Activated CD4-positive, alpha-beta T cell treated with anti-CD3 and anti-CD28 coated beads, Interleukin-2, amount 10 ng/mL, durations not matched to agents 24 days and 14 days (primary cell): ENCODE measurements at regions of chr20 and their contacts with region 1.

Region 1: DNA sequence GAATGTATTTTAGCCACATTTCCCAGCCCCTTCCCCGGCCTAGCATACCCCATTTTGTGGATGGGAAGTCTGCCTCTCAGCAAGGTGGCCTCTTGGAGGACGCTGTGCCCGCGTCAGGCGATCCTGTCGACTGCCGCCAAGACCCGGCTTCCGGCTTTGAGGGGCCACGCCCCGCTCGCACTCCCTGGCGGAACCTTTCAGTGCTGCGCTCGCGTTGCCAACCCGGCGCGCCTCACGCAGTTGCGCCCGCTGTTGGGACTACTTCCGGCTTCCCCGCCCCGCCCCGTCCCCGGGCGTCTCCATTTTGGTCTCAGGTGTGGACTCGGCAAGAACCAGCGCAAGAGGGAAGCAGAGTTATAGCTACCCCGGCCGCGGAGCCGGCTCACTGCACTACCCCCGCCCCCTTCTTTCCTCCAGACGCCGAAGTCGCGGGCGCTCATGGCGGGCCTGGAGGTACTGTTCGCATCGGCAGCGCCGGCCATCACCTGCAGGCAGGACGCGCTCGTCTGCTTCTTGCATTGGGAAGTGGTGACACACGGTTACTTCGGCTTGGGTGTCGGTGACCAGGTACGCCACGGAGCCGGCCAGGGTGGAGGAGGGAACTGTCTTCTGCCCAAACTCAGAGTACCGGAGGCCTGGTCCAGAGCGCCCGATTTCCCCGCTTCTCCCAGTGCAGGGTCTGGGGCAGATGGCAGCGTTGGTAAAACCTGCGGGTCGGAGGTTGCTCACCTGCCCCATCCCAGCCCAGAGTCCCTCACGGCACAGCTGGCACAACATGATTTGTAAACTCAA is at the start of gene PSMF1:
- DNase-seq: peak; percentile 99
- H3K4me3 Mint-ChIP-seq: peak within 1 kb of the TSS; percentile 96
- H3K27ac Mint-ChIP-seq: peak within 1 kb of the TSS; percentile 88
- H3K4me1 Mint-ChIP-seq: peaks cover 47% of the 10 kb centered on the region
- H3K27me3 Mint-ChIP-seq: peaks cover 2% of the 10 kb centered on the region
- total RNA-seq, gene PSMF1: 168 and 172 TPM in 2 replicates

Region 2: GRCh38 chr20:543369-544152 is 575.0 kb before region 1 on chr20 and contains the start of gene CSNK2A1:
- intact Hi-C with region 1: loop called (anchors 5 kb)
- DNase-seq: peak; percentile 99
- H3K4me3 Mint-ChIP-seq: peak within 1 kb of the TSS; percentile 88
- H3K27ac Mint-ChIP-seq: peak within 1 kb of the TSS; percentile 97
- H3K4me1 Mint-ChIP-seq: peaks cover 38% of the 10 kb centered on the region
- H3K27me3 Mint-ChIP-seq: peaks cover 9% of the 10 kb centered on the region
- total RNA-seq, gene CSNK2A1: 179 TPM in 2 replicates

Region 3: DNA sequence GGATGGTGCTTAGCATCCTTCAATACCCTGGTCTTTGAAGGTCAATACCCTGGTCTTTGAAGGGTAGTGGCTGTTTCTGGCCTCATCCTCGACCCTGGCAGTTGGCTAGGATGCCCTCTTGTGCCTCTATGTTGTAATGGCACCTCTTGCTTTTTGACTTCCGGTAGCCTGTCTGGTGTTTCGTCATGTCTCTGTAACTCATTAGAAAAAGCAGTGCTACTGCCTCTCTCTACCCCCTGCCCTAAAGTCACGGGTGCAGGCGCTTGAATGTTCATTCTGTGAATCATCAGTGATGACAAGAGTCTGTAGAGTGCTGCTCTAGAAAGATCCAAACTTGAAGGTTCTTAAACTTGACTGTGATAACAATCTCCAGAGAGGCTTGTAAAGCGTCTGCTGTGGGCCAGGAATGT is 144.7 kb before region 1 on chr20:
- intact Hi-C with region 1: loop called (anchors 10 kb)
- DNase-seq: peak; percentile 81
- H3K4me3 Mint-ChIP-seq: no peak overlapping the region
- H3K27ac Mint-ChIP-seq: no peak overlapping the region
- H3K4me1 Mint-ChIP-seq: peaks cover 2% of the 10 kb centered on the region
- H3K27me3 Mint-ChIP-seq: peaks cover 3% of the 10 kb centered on the region

Region 4: DNA sequence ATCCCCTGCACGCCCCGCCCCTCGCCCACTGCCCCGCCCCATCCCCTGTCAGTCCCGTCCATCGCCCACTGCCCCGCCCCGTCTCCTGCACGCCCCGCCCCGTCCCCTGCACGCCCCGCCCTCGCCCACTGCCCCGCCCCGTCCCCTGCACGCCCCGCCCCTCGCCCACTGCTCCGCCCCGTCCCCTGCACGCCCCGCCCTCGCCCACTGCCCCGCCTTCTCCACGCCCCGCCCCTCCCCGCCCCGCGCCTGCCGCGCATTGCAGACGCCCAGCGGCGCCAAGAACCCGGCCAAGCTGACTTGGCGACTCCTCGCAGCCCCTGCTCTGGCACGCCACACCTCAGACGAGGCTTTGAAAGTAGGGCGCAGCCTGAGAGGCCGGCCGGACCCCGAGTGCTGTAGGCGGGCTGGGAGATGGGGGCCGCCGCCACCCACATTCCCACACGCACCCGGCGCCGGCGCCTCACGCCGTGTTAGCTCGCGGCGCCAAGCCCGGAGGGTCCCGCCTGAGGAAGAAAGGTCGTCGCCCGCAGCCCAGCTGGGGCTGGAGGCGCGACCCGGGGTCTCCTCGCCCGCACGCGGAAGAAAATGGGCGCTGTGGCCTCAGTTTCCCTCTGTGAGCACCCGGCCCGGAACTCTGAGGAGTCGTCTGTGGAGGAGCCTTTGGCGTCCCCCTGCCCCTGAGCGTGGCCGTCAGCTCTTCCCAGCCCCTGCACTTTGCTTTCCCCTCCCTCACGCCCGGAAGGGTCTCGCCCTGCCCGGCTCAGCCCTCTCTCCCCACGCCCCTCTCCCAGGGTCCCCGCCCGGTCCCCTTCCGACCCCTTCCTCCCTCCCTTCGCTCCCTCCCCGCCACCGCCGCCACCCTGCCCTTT is 107.5 kb after region 1 on chr20 and contains the start of gene RAD21L1:
- intact Hi-C with region 1: loop called (anchors 5 kb)
- DNase-seq: peak; percentile 88
- H3K4me3 Mint-ChIP-seq: peak within 1 kb of the TSS; percentile 86
- H3K27ac Mint-ChIP-seq: peak within 1 kb of the TSS; percentile 11
- H3K4me1 Mint-ChIP-seq: peaks cover 16% of the 10 kb centered on the region
- H3K27me3 Mint-ChIP-seq: peaks cover 50% of the 10 kb centered on the region
- total RNA-seq, gene RAD21L1: not detected in 2 replicates

Region 5: GRCh38 chr20:1466211-1467081 is 347.9 kb after region 1 on chr20 and contains the start of gene NSFL1C:
- intact Hi-C with region 1: loop called (anchors 1 kb)
- DNase-seq: peak; percentile 100
- H3K4me3 Mint-ChIP-seq: peak within 1 kb of the TSS; percentile 90
- H3K27ac Mint-ChIP-seq: peak within 1 kb of the TSS; percentile 82
- H3K4me1 Mint-ChIP-seq: peaks cover 44% of the 10 kb centered on the region
- H3K27me3 Mint-ChIP-seq: peaks cover 19% of the 10 kb centered on the region
- total RNA-seq, gene NSFL1C: 101 and 109 TPM in 2 replicates